Endothelial cell of umbilical vein (primary cell): ENCODE measurements at regions of chr12 and their contacts with region 1.

Region 1: GRCh38 chr12:442235-442884 is 17.4 kb upstream of the B4GALNT3 start:
- DNase-seq: peak; percentile 59
- H3K4me3 ChIP-seq: no peak overlapping the region
- H3K27ac ChIP-seq: no peak overlapping the region
- H3K4me1 ChIP-seq: no peaks in the 10 kb centered on the region
- H3K27me3 ChIP-seq: peaks cover 2% of the 10 kb centered on the region in 2 experiments
- CTCF ChIP-seq: peak; percentile 73
- POLR2A ChIP-seq: no peak

Region 2: GRCh38 chr12:321607-322326 is 120.6 kb before region 1 on chr12:
- CTCF ChIA-PET with region 1: no interaction called
- POLR2A ChIA-PET with region 1: no interaction called
- dilution Hi-C with region 1: no loop called
- intact Hi-C with region 1: no loop called
- DNase-seq: peak; percentile 12
- H3K4me3 ChIP-seq: no peak overlapping the region
- H3K27ac ChIP-seq: no peak overlapping the region
- H3K4me1 ChIP-seq: no peaks in the 10 kb centered on the region
- H3K27me3 ChIP-seq: no peaks in the 10 kb centered on the region
- CTCF ChIP-seq: no peak
- POLR2A ChIP-seq: no peak

Region 3: DNA sequence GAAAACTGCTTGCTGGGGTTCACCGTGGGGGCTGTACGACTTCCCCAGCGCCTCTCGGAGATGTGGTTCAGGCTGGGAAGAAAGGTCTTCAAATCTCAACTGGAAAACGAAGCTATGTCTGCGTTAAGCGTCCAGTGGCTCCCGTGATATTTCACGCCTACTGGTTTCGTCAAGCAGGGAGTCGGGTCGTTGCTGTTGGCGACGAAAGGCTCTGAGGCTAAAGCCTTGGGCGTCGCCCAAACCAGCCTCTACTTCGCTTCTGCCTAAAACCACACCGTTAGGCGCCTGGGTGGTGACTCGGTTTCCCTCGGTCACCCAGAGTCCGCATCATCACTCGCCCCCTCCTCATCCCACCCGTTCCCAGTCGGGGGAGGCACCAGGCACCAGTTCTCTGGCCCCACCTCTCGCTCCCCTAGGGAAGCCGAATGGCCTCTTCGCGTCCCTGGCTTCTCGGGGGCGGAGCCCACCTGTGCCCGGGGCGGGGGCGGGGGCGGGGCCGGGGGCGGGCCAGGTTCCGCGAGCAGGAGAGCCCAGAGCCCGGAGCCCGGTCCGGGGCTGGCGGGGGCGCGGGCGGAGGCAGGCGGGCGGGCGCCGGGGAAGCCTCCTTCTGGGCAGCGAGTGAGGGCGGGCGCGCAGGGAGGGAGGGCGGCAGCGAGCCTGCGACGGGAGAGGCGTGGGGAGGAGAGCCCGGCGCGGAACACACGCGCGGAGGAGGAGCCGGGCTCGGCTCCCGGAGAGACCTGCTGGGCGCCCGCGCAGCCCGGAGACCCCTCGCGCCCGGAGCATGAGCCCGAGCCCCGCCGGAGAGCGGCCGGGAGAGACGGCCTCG is 17.3 kb after region 1 on chr12 and contains the start of gene B4GALNT3:
- CTCF ChIA-PET with region 1: interaction called, 15 read pairs
- POLR2A ChIA-PET with region 1: no interaction called
- dilution Hi-C with region 1: no loop called
- intact Hi-C with region 1: no loop called
- DNase-seq: no peak
- H3K4me3 ChIP-seq: peak within 1 kb of the TSS in 1 of 3 experiments; percentile 31
- H3K27ac ChIP-seq: no peak within 1 kb of the TSS
- H3K4me1 ChIP-seq: no peaks in the 10 kb centered on the region
- H3K27me3 ChIP-seq: peaks cover 66 to 87% of the 10 kb centered on the region in 2 experiments
- CTCF ChIP-seq: no peak
- POLR2A ChIP-seq: no peak
- total RNA-seq, gene B4GALNT3: not detected in 2 replicates

Region 4: GRCh38 chr12:530308-530707 is 87.9 kb after region 1 on chr12:
- CTCF ChIA-PET with region 1: interaction called, 14 read pairs
- POLR2A ChIA-PET with region 1: no interaction called
- dilution Hi-C with region 1: no loop called
- intact Hi-C with region 1: no loop called
- DNase-seq: peak; percentile 79
- H3K4me3 ChIP-seq: no peak overlapping the region
- H3K27ac ChIP-seq: no peak overlapping the region
- H3K4me1 ChIP-seq: peaks cover 7% of the 10 kb centered on the region
- H3K27me3 ChIP-seq: peaks cover 2 to 6% of the 10 kb centered on the region in 2 experiments
- CTCF ChIP-seq: no peak
- POLR2A ChIP-seq: no peak

Region 5: GRCh38 chr12:546921-547845 is 104.8 kb after region 1 on chr12:
- CTCF ChIA-PET with region 1: interaction called, 173 read pairs
- POLR2A ChIA-PET with region 1: no interaction called
- dilution Hi-C with region 1: no loop called
- intact Hi-C with region 1: loop called (anchors 1 kb)
- DNase-seq: peak; percentile 61
- H3K4me3 ChIP-seq: no peak overlapping the region
- H3K27ac ChIP-seq: no peak overlapping the region
- H3K4me1 ChIP-seq: peaks cover 9% of the 10 kb centered on the region
- H3K27me3 ChIP-seq: peaks cover 0 to 10% of the 10 kb centered on the region in 2 experiments
- CTCF ChIP-seq: peak; percentile 98
- POLR2A ChIP-seq: no peak

Region 6: GRCh38 chr12:1030779-1031178 is 588.4 kb after region 1 on chr12:
- CTCF ChIA-PET with region 1: no interaction called
- POLR2A ChIA-PET with region 1: no interaction called
- dilution Hi-C with region 1: no loop called
- intact Hi-C with region 1: no loop called
- DNase-seq: no peak
- H3K4me3 ChIP-seq: no peak overlapping the region
- H3K27ac ChIP-seq: no peak overlapping the region
- H3K4me1 ChIP-seq: no peaks in the 10 kb centered on the region
- H3K27me3 ChIP-seq: no peaks in the 10 kb centered on the region
- CTCF ChIP-seq: no peak
- POLR2A ChIP-seq: no peak

Region 7: GRCh38 chr12:1373901-1374695 is 931.7 kb after region 1 on chr12:
- CTCF ChIA-PET with region 1: no interaction called
- POLR2A ChIA-PET with region 1: no interaction called
- dilution Hi-C with region 1: no loop called
- intact Hi-C with region 1: no loop called
- DNase-seq: no peak
- H3K4me3 ChIP-seq: no peak overlapping the region
- H3K27ac ChIP-seq: no peak overlapping the region
- H3K4me1 ChIP-seq: no peaks in the 10 kb centered on the region
- H3K27me3 ChIP-seq: no peaks in the 10 kb centered on the region
- CTCF ChIP-seq: no peak
- POLR2A ChIP-seq: no peak